ENCODE measurements at regions of chr11 and their contacts with region 1.

Region 1: DNA sequence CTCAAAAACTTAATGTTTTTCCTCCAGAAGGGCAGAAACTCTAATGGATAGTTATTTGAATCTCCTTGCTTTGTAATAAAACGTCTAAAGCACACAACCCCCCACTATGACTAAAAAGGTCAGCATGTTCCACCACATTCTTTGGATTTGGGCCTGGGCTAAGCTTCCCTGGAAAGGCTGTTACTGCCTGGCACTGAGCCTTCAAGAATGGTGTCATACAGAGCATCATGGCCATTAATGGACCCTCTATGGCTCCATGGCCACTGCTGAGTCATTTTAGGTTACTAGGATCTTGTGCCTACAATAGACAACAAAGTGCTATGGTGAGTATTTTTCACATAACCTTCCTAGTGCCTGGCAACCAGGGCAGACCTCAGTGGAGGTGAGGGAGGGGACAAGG is 242.6 kb upstream of the FAT3 start:
- DNase-seq: no peak
- H3K4me3 ChIP-seq: no peak overlapping the region
- H3K27ac ChIP-seq: no peak overlapping the region
- H3K4me1 ChIP-seq: peaks cover 7% of the 10 kb centered on the region
- H3K27me3 ChIP-seq: no peaks in the 10 kb centered on the region
- CTCF ChIP-seq: no peak

Region 2: GRCh38 chr11:91673705-91674104 is 308.3 kb before region 1 on chr11:
- intact Hi-C with region 1: no loop called
- DNase-seq: no peak
- H3K4me3 ChIP-seq: no peak overlapping the region
- H3K27ac ChIP-seq: no peak overlapping the region
- H3K4me1 ChIP-seq: no peaks in the 10 kb centered on the region
- H3K27me3 ChIP-seq: no peaks in the 10 kb centered on the region
- CTCF ChIP-seq: no peak

Region 3: DNA sequence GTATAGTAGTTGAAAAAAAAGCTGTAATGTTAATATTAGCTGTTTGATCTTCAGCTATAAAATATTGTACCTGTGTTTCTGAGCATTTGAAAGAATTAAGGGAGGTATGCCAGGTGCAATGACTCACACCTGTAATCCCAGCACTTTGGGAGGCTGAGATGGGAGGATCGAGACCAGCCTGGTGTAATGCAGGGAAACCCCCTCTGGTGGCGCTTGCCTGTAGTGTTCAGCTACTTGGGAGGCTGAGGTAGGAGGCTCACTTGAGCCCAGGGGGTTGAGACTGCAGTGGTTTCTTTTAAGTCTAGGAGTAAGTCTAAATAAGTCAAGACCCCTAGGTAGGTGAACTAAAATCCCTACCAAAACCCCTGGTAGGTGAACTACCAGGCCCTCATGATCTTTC is 1722.2 kb after region 1 on chr11:
- intact Hi-C with region 1: loop called (anchors 5 kb)
- DNase-seq: no peak
- H3K4me3 ChIP-seq: no peak overlapping the region
- H3K27ac ChIP-seq: no peak overlapping the region
- H3K4me1 ChIP-seq: peaks cover 4% of the 10 kb centered on the region
- H3K27me3 ChIP-seq: no peaks in the 10 kb centered on the region
- CTCF ChIP-seq: no peak

Measured in left ventricle myocardium inferior (tissue), 1 donor.